ENCODE measurements at regions of chr5 and their contacts with region 1.

Region 1: DNA sequence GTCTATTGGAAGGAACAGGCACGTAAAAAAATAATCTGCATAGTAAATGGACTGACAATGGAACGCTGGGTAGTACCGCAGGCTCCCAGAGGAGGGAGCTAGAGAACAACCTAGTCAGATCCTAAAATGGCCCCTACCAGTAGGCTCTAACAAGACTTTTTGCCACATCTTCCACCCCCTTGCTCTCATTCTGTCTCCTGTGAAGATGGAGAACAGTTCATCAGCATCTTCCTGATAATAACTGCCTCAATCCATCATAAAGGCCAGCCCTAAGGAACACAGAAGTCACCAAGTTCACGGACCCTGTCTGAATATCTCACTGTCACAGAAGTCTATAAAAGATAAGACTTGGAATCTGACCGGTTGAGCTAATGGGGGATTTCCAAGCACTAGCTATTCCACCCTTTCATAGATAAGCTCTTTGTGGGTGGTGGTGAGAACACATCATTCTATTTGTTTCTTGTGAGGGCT is 133.4 kb downstream of the SLC1A3 start:
- DNase-seq: peak; percentile 85
- H3K4me3 ChIP-seq: no peak overlapping the region
- H3K27ac ChIP-seq: no peak overlapping the region
- H3K4me1 ChIP-seq: peaks cover 4% of the 10 kb centered on the region
- H3K27me3 ChIP-seq: no peaks in the 10 kb centered on the region
- CTCF ChIP-seq: peak; percentile 95

Region 2: DNA sequence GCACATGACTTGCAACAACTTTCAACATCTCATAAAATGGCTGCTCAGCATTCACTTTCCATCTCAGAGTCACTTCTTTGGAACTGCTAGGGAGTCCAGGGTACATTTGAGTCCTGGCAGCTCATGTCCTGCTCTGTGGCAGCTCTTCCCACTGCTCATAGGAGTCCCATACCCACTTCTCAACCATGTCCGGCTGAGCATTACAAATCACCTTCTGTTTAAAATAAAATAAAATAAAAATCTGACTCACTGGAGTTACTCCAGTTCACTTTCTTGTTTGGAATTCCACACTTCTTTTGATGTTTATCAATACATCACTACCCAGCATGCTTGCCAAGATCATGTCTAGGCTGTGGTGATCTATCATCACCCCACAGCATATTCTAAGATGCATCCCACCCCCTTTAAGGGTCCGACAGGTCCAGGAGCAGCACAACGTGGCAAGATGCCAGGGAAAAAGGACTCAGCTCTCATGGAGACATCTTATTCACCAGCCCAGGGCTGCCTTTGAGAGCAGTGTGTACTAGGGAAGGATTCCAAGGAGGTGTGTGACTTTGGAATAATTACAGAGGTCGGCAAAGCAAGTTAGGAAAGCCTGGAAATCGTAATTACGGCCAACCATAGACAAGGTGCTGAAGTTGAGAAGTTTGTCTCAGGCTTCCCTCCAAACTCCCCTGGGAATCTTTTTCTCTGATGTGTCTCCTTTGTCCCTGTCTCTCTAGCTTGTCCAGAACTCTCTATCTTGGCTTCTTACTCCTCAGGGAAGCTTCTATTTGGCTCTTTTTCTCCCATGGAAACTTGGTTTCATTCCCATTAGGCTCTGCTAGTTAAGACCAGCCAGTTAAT is 244.8 kb before region 1 on chr5:
- CTCF ChIA-PET with region 1: interaction called, 10 read pairs
- POLR2A ChIA-PET with region 1: no interaction called
- intact Hi-C with region 1: no loop called
- DNase-seq: peak; percentile 17
- H3K4me3 ChIP-seq: no peak overlapping the region
- H3K27ac ChIP-seq: no peak overlapping the region
- H3K4me1 ChIP-seq: peaks cover 33% of the 10 kb centered on the region
- H3K27me3 ChIP-seq: peaks cover 11% of the 10 kb centered on the region
- CTCF ChIP-seq: no peak

Region 3: DNA sequence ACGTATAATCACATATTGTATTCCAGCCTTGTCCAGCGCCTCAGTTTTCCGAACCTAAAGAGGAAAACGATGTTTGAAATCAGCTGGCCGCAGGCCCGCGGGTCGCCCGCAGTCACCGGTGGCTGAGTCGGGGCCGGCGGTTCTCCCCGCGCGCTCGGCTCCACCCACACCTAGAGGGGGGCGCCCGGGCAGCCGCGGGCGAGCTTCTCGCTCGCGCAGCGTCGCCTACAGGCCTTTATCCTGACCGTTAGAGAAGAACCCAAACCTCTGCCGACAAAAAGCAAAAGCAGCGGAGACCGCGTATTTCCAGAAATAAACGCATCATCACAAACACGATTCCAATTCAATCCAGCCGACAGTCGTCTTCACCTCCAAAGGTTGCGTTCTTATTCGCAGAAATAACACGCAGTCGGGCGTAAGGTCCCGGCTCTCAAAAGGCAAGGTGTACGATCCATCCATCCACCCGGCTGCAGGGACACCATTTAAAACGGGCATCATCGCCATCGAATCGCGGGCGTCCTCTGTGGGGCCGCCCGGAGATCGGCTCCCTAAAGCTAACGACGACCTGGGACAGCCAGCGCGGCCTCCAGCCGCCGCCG is 136.1 kb after region 1 on chr5:
- CTCF ChIA-PET with region 1: interaction called, 5 read pairs
- POLR2A ChIA-PET with region 1: no interaction called
- intact Hi-C with region 1: loop called (anchors 5 kb)
- DNase-seq: peak; percentile 88
- H3K4me3 ChIP-seq: peak overlapping the region; percentile 92
- H3K27ac ChIP-seq: peak overlapping the region; percentile 95
- H3K4me1 ChIP-seq: peaks cover 37% of the 10 kb centered on the region
- H3K27me3 ChIP-seq: no peaks in the 10 kb centered on the region
- CTCF ChIP-seq: peak; percentile 58

Region 4: DNA sequence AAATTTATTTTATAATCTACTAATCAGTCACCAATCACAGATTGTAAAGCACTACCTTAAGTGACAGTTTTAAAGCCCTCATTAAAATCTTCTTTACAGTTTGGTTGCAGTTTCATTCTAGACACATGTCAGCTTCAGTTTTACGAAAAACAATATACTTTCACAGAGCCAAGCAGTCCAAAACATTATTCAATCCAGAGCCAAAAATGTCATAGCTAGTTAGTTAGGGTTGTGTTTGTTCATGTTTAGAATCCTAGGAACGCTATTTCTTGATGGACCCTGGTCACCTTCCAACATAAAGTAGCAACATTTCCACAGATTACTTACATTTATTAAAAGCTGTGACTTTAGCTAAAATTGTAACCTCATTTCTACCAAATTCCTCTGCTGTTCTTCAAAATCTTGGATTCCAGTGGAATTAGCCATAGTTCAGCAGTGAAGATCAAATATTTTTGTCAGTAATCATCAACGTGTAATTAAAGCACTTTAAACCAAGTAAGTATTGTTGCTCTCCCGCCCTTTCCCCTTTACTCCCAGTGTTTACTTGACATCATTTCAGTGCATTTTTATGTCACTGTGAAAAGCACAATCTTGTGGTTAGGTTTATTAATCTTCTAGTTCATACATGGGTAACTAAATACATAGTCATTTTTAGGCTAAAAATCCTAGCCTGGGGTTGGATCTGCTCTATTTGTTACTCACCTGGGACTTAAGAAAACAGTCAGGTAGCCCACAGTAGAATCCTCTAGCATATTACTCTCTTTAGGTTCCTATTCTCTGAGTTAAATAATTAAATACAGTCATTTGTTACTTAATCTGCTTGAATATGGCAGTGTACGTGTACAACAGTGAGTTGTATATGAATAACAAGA is 211.0 kb after region 1 on chr5:
- CTCF ChIA-PET with region 1: no interaction called
- POLR2A ChIA-PET with region 1: no interaction called
- intact Hi-C with region 1: loop called (anchors 5 kb)
- DNase-seq: no peak
- H3K4me3 ChIP-seq: no peak overlapping the region
- H3K27ac ChIP-seq: no peak overlapping the region
- H3K4me1 ChIP-seq: peaks cover 60% of the 10 kb centered on the region
- H3K27me3 ChIP-seq: no peaks in the 10 kb centered on the region
- CTCF ChIP-seq: no peak

Region 5: DNA sequence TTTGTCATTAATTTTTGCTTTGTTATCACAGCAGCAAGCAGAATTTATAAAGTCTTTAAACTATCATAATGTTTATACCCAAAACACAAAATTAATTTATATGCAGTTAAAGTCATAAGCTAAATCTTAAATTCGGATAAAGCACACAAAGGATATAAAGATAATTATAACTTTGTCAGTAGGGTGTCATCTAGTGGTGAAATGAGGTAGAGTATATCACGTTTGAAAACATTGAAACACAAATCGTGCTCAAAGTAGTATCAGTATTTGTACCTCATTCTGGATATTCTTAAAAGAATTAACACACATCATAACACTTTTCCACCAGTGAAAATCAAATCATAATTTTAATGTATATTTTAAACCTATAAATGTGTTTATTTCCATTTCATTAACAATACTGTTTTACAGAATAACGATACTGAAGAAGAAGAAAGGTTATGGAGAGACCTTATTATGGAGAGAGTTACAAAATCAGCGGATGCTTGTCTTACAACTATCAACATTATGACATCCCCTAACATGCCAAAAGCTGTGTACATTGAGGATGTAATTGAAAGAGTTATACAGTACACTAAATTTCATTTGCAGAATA is 266.3 kb after region 1 on chr5:
- CTCF ChIA-PET with region 1: interaction called, 6 read pairs
- POLR2A ChIA-PET with region 1: no interaction called
- intact Hi-C with region 1: loop called (anchors 2 kb)
- DNase-seq: peak; percentile 49
- H3K4me3 ChIP-seq: no peak overlapping the region
- H3K27ac ChIP-seq: no peak overlapping the region
- H3K4me1 ChIP-seq: no peaks in the 10 kb centered on the region
- H3K27me3 ChIP-seq: no peaks in the 10 kb centered on the region
- CTCF ChIP-seq: peak; percentile 77

Measured in A673 (cell line).